Activated CD8-positive, alpha-beta memory T cell treated with anti-CD3 and anti-CD28 coated beads, Interleukin-2, amount 10 ng/mL, durations not matched to agents 7 days and 5 days (primary cell): ENCODE measurements at regions of chr1 and their contacts with region 1.

Region 1: DNA sequence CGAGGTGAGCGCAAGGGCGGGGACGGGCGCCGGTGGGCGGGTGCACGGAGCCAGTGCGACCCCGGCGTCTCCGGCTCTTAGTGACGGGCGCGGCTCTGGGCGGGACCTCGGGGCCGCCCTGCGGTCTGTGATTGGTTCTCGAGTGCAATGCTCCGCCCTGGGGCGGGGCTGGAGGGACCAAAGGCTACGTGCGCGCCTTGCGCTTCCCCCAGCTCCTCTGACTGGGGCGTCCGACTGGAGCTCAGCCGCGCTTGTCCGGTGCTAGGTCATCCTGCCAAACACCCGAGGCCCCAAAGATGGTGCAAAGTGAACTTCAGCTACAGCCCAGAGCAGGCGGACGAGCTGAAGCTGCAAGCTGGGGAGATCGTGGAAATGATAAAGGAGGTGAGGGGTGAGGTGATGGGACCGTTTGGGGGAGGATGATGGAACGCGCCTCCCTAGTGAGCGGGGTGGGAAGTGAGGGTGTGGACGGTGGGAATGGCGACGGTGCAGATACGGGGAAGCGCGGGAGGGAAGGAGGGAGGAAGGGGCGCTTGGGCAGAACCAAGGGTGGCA is 811 bp downstream of the SH3D21 start:
- DNase-seq: peak; percentile 95
- ATAC-seq: peak; percentile 99
- H3K4me3 Mint-ChIP-seq: peak overlapping the region; percentile 89
- H3K27ac Mint-ChIP-seq: peak overlapping the region; percentile 87
- H3K4me1 Mint-ChIP-seq: peaks cover 32% of the 10 kb centered on the region
- H3K27me3 Mint-ChIP-seq: no peaks in the 10 kb centered on the region

Region 2: GRCh38 chr1:36323597-36324352 is 16.8 kb after region 1 on chr1 and contains the start of gene EVA1B:
- CTCF ChIA-PET with region 1: interaction called, 13 read pairs
- DNase-seq: peak; percentile 75
- ATAC-seq: peak; percentile 69
- H3K4me3 Mint-ChIP-seq: peak within 1 kb of the TSS; percentile 73
- H3K27ac Mint-ChIP-seq: peak within 1 kb of the TSS; percentile 70
- H3K4me1 Mint-ChIP-seq: peaks cover 50% of the 10 kb centered on the region
- H3K27me3 Mint-ChIP-seq: peaks cover 8% of the 10 kb centered on the region
- total RNA-seq, gene EVA1B: 16.4 to 23.9 TPM

Region 3: DNA sequence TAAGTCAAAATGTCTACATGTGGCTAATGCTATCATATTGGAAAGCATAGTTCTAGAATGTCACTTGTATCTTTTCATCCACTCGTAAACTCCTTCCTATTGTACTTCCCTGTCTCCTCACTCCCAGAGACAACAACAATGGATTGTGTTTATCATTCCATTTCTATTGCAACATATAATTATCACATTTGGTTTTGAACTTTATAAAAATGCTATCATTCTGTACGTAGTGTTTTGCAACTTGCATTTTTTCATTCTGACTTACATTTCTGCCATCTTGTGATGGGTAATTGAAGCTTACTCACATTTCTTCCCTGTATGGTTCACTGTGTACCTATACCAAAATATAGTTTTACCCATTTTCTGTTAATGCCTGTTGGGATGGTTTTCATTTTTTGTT is 190.2 kb after region 1 on chr1:
- CTCF ChIA-PET with region 1: no interaction called
- DNase-seq: no peak
- ATAC-seq: no peak
- H3K4me3 Mint-ChIP-seq: no peak overlapping the region
- H3K27ac Mint-ChIP-seq: no peak overlapping the region
- H3K4me1 Mint-ChIP-seq: no peaks in the 10 kb centered on the region
- H3K27me3 Mint-ChIP-seq: peaks cover 24% of the 10 kb centered on the region